ENCODE measurements at regions of chr2 and their contacts with region 1.

Region 1: DNA sequence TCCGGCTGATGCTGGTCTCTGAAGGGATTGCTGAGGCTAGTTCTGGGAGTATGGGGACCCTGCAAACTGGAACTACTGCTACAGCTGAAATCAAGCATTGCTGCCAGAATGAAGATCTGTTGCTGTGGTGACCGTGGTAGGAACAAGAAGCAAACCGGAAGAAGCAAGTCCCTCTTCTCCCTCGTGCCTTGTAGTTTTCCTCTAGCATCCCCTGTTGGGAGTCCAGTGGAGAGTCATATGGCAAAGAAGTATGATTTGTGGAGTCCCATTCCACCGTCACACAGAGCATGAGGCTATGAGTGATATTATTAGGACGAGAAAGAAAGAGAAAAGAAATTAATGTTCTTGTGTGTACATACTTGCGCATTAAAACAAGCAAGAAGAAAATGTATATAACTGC is 138.8 kb upstream of the SP5 start:
- DNase-seq: no peak
- ATAC-seq: no peak
- H3K4me3 ChIP-seq: no peak overlapping the region
- H3K27ac ChIP-seq: no peak overlapping the region
- H3K4me1 ChIP-seq: no peaks in the 10 kb centered on the region
- H3K27me3 ChIP-seq: no peaks in the 10 kb centered on the region
- CTCF ChIP-seq: no peak
- EP300 ChIP-seq: no peak
- POLR2A ChIP-seq: no peak
- RAD21 ChIP-seq: no peak

Region 2: GRCh38 chr2:170386554-170386953 is 189.7 kb before region 1 on chr2:
- CTCF ChIA-PET with region 1: no interaction called
- POLR2A ChIA-PET with region 1: no interaction called
- RAD21 ChIA-PET with region 1: no interaction called
- SMC1A ChIA-PET with region 1: no interaction called
- in situ Hi-C with region 1: no loop called
- intact Hi-C with region 1: no loop called
- DNase-seq: no peak
- ATAC-seq: no peak
- H3K4me3 ChIP-seq: no peak overlapping the region
- H3K27ac ChIP-seq: no peak overlapping the region
- H3K4me1 ChIP-seq: no peaks in the 10 kb centered on the region
- H3K27me3 ChIP-seq: no peaks in the 10 kb centered on the region
- CTCF ChIP-seq: no peak
- EP300 ChIP-seq: no peak
- POLR2A ChIP-seq: no peak
- RAD21 ChIP-seq: no peak

Region 3: GRCh38 chr2:170514140-170514539 is 62.2 kb before region 1 on chr2:
- CTCF ChIA-PET with region 1: no interaction called
- POLR2A ChIA-PET with region 1: no interaction called
- RAD21 ChIA-PET with region 1: no interaction called
- SMC1A ChIA-PET with region 1: no interaction called
- in situ Hi-C with region 1: no loop called
- intact Hi-C with region 1: no loop called
- DNase-seq: no peak
- ATAC-seq: no peak
- H3K4me3 ChIP-seq: no peak overlapping the region
- H3K27ac ChIP-seq: no peak overlapping the region
- H3K4me1 ChIP-seq: 0 out of 2 replicates have a peak, but pooled peaks cover 3% of the 10 kb centered on the region
- H3K27me3 ChIP-seq: no peaks in the 10 kb centered on the region
- CTCF ChIP-seq: no peak
- EP300 ChIP-seq: no peak
- POLR2A ChIP-seq: no peak
- RAD21 ChIP-seq: no peak

Region 4: GRCh38 chr2:170587922-170588321 is 11.6 kb after region 1 on chr2:
- CTCF ChIA-PET with region 1: interaction called, 5 read pairs
- POLR2A ChIA-PET with region 1: no interaction called
- RAD21 ChIA-PET with region 1: interaction called, 3 read pairs
- SMC1A ChIA-PET with region 1: interaction called, 13 read pairs
- in situ Hi-C with region 1: no loop called
- intact Hi-C with region 1: no loop called
- DNase-seq: no peak
- ATAC-seq: no peak
- H3K4me3 ChIP-seq: no peak overlapping the region
- H3K27ac ChIP-seq: no peak overlapping the region
- H3K4me1 ChIP-seq: no peaks in the 10 kb centered on the region
- H3K27me3 ChIP-seq: no peaks in the 10 kb centered on the region; a peak in 1 of 4 replicates
- CTCF ChIP-seq: no peak
- EP300 ChIP-seq: no peak
- POLR2A ChIP-seq: no peak
- RAD21 ChIP-seq: no peak

Region 5: DNA sequence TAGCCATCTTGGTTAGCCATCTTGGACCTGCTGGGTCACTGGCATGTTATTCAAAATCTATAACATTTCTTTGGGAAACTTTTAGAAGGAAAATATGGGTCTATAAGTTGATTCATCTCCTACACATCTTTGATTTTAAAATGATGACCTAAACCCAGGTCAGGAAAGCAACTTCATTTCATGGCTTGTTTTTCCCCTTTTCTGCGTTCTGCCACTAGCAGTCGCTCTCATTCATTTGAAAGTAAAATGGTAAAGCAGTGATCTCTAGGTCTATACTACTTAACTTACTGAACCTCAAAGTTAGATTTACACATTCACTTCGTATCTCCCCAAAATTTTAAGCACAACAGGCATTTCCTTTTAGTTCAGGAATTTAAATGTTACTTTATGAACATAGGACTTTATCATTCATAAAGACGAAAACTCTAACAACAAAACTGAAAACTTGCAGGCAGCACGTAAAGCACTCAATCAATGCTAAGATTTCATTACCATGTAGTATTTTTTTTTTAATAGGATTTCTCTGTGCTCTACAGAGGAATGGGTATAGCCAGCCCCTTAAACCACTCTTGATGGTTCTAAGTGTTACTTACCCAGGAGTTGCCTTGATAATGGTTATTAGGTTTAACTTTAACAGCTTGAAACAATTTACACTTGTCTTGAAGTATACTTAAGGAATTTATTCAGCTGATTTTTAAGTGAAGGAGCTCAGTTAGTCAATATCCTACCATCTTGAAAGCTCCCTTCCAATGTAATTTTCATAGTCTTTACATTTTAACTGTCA is 415.3 kb after region 1 on chr2:
- CTCF ChIA-PET with region 1: no interaction called
- POLR2A ChIA-PET with region 1: no interaction called
- RAD21 ChIA-PET with region 1: no interaction called
- SMC1A ChIA-PET with region 1: no interaction called
- in situ Hi-C with region 1: no loop called
- intact Hi-C with region 1: no loop called
- DNase-seq: no peak
- ATAC-seq: no peak
- H3K4me3 ChIP-seq: no peak overlapping the region
- H3K27ac ChIP-seq: no peak overlapping the region
- H3K4me1 ChIP-seq: no peaks in the 10 kb centered on the region
- H3K27me3 ChIP-seq: no peaks in the 10 kb centered on the region
- CTCF ChIP-seq: 0 out of 6 replicates have a peak, but pooled peaks of 1 of the 3 experiments have one; percentile 5
- EP300 ChIP-seq: no peak
- POLR2A ChIP-seq: no peak
- RAD21 ChIP-seq: no peak

Measured in GM12878 (cell line).